GM12878 (cell line): ENCODE measurements at regions of chr4 and their contacts with region 1.

Region 1: GRCh38 chr4:77095101-77095821 is 19.5 kb upstream of the CCNI start:
- DNase-seq: no peak
- ATAC-seq: peak; percentile 100
- H3K4me3 ChIP-seq: no peak overlapping the region
- H3K27ac ChIP-seq: no peak overlapping the region
- H3K4me1 ChIP-seq: no peaks in the 10 kb centered on the region
- H3K27me3 ChIP-seq: no peaks in the 10 kb centered on the region
- CTCF ChIP-seq: peak; percentile 86 to 95 (median 91)
- EP300 ChIP-seq: no peak
- POLR2A ChIP-seq: no peak
- RAD21 ChIP-seq: peak; percentile 80

Region 2: DNA sequence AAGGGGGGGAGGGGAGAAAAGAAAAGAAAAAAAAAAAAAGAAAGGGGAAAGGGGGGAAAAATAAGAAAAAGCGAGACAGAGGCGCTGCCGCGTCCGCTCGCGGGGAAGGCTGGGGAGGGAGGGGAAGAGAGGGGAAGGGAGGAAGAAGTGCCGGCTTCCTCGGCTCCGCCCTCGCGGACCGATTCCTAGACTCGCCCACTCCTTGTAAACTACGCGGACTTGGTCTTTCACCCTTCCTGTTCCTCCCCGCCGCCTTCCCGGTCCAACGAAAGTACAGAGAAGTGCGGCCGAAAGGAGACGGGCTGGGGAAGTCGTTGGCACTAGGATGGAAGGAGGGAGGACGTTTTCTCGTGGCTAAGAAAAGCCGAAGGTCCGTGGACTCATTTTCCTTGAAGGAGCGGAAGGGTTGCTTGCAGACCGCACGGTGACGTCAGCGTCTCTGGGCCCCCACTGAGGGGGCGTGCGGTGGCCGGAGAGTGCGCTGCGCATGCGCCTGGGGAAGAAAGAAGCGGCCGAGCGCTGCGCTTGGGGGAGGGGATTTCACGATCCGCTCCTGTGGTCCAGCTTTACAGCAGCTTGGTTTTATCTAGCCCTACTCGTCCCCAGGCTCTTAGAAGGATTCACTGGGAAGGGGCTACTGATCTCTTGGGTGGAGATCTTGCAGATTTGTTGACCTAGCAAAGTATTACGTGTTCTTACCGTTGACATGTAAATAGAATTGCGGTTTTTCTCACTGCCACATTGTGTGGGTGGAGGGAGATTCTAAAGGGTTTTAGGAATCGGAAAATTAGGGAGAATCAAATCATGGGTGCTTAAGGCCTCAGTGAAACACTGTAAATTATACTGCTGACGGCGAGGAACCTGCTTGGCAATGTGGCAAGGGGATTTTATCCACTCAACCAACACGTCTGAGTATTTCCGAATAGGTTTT is 19.1 kb before region 1 on chr4 and contains the start of gene CCNI:
- CTCF ChIA-PET with region 1: interaction called, 27 read pairs
- POLR2A ChIA-PET with region 1: interaction called, 3 read pairs
- RAD21 ChIA-PET with region 1: interaction called, 8 read pairs
- SMC1A ChIA-PET with region 1: interaction called, 12 read pairs
- in situ Hi-C with region 1: no loop called
- intact Hi-C with region 1: no loop called
- DNase-seq: peak; percentile 92
- ATAC-seq: peak; percentile 77
- H3K4me3 ChIP-seq: peak within 1 kb of the TSS; percentile 97
- H3K27ac ChIP-seq: peak within 1 kb of the TSS; percentile 100
- H3K4me1 ChIP-seq: 0 out of 2 replicates have a peak, but pooled peaks cover 3% of the 10 kb centered on the region
- H3K27me3 ChIP-seq: no peaks in the 10 kb centered on the region
- CTCF ChIP-seq: no peak
- EP300 ChIP-seq: peak; percentile 4 to 78; a peak in 3 of 4 replicates
- POLR2A ChIP-seq: peak; percentile 82
- RAD21 ChIP-seq: no peak
- polyA plus RNA-seq, gene CCNI: 72.4 to 82.4 TPM

Region 3: DNA sequence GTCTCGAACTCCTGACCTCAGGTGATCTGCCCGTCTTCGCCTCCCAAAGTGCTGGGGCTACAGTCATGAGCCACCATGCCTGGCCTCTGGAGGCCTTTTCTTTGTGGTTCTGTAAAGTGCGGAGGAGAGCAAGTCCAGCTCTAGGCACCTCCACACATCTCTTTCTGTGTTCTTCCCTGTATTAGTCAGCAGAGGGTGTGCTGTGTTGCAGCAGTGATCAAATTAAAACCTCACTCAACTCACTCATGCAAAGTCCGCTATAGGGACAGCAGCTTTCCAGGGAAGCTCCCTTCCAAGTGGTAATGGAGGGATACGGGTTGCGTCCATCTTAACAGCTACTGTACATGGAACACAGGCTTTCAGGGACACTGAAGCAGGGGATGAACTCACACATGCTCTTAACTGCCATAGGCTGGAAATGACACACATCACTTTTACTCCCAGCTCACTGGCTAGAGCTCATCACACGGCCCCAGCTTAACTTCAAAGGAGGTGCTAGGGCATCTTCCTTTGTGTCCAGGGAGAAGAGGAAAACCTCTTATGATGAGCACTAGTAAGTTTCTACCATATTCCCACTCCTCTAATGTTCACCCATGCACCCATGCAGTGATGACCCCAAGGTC is 25.7 kb after region 1 on chr4:
- CTCF ChIA-PET with region 1: interaction called, 8 read pairs
- POLR2A ChIA-PET with region 1: no interaction called
- RAD21 ChIA-PET with region 1: interaction called, 11 read pairs
- SMC1A ChIA-PET with region 1: interaction called, 10 read pairs
- in situ Hi-C with region 1: no loop called
- intact Hi-C with region 1: no loop called
- DNase-seq: no peak
- ATAC-seq: peak; percentile 79
- H3K4me3 ChIP-seq: no peak overlapping the region
- H3K27ac ChIP-seq: no peak overlapping the region
- H3K4me1 ChIP-seq: no peaks in the 10 kb centered on the region
- H3K27me3 ChIP-seq: no peaks in the 10 kb centered on the region
- CTCF ChIP-seq: peak; percentile 17 to 38 (median 22); a peak in 4 of 6 replicates
- EP300 ChIP-seq: no peak
- POLR2A ChIP-seq: no peak
- RAD21 ChIP-seq: peak; percentile 52; the same call in 1 of the 2 replicates

Region 4: GRCh38 chr4:77156533-77156911 is 61.3 kb after region 1 on chr4:
- CTCF ChIA-PET with region 1: interaction called, 40 read pairs
- POLR2A ChIA-PET with region 1: interaction called, 5 read pairs
- RAD21 ChIA-PET with region 1: interaction called, 10 read pairs
- SMC1A ChIA-PET with region 1: interaction called, 26 read pairs
- in situ Hi-C with region 1: no loop called
- intact Hi-C with region 1: loop called (anchors 5 kb)
- DNase-seq: peak; percentile 98
- ATAC-seq: peak; percentile 92
- H3K4me3 ChIP-seq: peak overlapping the region; percentile 93
- H3K27ac ChIP-seq: peak overlapping the region; percentile 99
- H3K4me1 ChIP-seq: peaks cover 35% of the 10 kb centered on the region
- H3K27me3 ChIP-seq: no peaks in the 10 kb centered on the region
- CTCF ChIP-seq: no peak
- EP300 ChIP-seq: no peak
- POLR2A ChIP-seq: peak; percentile 76
- RAD21 ChIP-seq: no peak

Region 5: GRCh38 chr4:77177199-77177598 is 81.9 kb after region 1 on chr4:
- CTCF ChIA-PET with region 1: interaction called, 18 read pairs
- POLR2A ChIA-PET with region 1: interaction called, 3 read pairs
- RAD21 ChIA-PET with region 1: no interaction called
- SMC1A ChIA-PET with region 1: interaction called, 5 read pairs
- in situ Hi-C with region 1: no loop called
- intact Hi-C with region 1: no loop called
- DNase-seq: no peak
- ATAC-seq: no peak
- H3K4me3 ChIP-seq: no peak overlapping the region
- H3K27ac ChIP-seq: no peak overlapping the region
- H3K4me1 ChIP-seq: no peaks in the 10 kb centered on the region
- H3K27me3 ChIP-seq: no peaks in the 10 kb centered on the region; a peak in 1 of 4 replicates
- CTCF ChIP-seq: no peak
- EP300 ChIP-seq: no peak
- POLR2A ChIP-seq: no peak
- RAD21 ChIP-seq: no peak

Region 6: GRCh38 chr4:77209012-77209411 is 113.8 kb after region 1 on chr4:
- CTCF ChIA-PET with region 1: interaction called, 535 read pairs
- POLR2A ChIA-PET with region 1: interaction called, 3 read pairs
- RAD21 ChIA-PET with region 1: interaction called, 229 read pairs
- SMC1A ChIA-PET with region 1: interaction called, 286 read pairs
- in situ Hi-C with region 1: loop called (anchors 5 kb)
- intact Hi-C with region 1: no loop called
- DNase-seq: no peak
- ATAC-seq: no peak
- H3K4me3 ChIP-seq: no peak overlapping the region
- H3K27ac ChIP-seq: no peak overlapping the region
- H3K4me1 ChIP-seq: no peaks in the 10 kb centered on the region
- H3K27me3 ChIP-seq: peaks cover 0 to 4% of the 10 kb centered on the region in 2 experiments; a peak in 2 of 4 replicates
- CTCF ChIP-seq: no peak
- EP300 ChIP-seq: no peak
- POLR2A ChIP-seq: no peak
- RAD21 ChIP-seq: no peak